ENCODE measurements at regions of chr12 and their contacts with region 1.

Region 1: GRCh38 chr12:23204933-23205778 is 580.2 kb downstream of the ETNK1 start:
- DNase-seq: peak in 6 of 9 donors; percentile 5 to 29 (median 24)
- ATAC-seq: peak; percentile 70
- H3K4me3 ChIP-seq: no peak overlapping the region
- H3K4me3 Mint-ChIP-seq: no peak overlapping the region
- H3K27ac ChIP-seq: no peak overlapping the region
- H3K27ac Mint-ChIP-seq: no peak overlapping the region
- H3K4me1 ChIP-seq: no peaks in the 10 kb centered on the region
- H3K4me1 Mint-ChIP-seq: no peaks in the 10 kb centered on the region
- H3K27me3 ChIP-seq: no peaks in the 10 kb centered on the region
- H3K27me3 Mint-ChIP-seq: peaks cover 0 to 6% (median 5%) of the 10 kb centered on the region in 5 donors

Region 2: DNA sequence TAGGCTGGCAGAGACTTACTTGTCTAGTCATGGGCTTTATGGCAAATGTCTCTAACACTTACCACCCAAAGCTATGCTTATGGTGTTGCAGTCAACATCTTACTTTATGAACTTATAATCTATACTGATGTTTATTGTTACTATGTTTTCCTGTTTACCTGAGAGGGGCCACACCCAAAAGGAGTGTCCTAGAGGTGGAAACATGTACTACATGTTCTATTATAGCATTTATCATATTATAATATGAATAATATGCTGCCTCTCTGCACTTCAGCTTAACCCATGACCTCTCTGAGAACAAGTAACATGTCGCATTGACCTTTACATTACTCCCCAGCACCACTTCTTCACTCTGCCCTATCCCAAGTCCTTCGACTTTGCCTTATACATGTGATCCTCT is 78.4 kb before region 1 on chr12:
- CTCF ChIA-PET with region 1: no interaction called
- POLR2A ChIA-PET with region 1: no interaction called
- intact Hi-C with region 1: no loop called
- DNase-seq: no peak
- ATAC-seq: no peak
- H3K4me3 ChIP-seq: no peak overlapping the region
- H3K4me3 Mint-ChIP-seq: no peak overlapping the region
- H3K27ac ChIP-seq: no peak overlapping the region
- H3K27ac Mint-ChIP-seq: no peak overlapping the region
- H3K4me1 ChIP-seq: no peaks in the 10 kb centered on the region
- H3K4me1 Mint-ChIP-seq: no peaks in the 10 kb centered on the region
- H3K27me3 ChIP-seq: no peaks in the 10 kb centered on the region
- H3K27me3 Mint-ChIP-seq: no peaks in the 10 kb centered on the region

Region 3: DNA sequence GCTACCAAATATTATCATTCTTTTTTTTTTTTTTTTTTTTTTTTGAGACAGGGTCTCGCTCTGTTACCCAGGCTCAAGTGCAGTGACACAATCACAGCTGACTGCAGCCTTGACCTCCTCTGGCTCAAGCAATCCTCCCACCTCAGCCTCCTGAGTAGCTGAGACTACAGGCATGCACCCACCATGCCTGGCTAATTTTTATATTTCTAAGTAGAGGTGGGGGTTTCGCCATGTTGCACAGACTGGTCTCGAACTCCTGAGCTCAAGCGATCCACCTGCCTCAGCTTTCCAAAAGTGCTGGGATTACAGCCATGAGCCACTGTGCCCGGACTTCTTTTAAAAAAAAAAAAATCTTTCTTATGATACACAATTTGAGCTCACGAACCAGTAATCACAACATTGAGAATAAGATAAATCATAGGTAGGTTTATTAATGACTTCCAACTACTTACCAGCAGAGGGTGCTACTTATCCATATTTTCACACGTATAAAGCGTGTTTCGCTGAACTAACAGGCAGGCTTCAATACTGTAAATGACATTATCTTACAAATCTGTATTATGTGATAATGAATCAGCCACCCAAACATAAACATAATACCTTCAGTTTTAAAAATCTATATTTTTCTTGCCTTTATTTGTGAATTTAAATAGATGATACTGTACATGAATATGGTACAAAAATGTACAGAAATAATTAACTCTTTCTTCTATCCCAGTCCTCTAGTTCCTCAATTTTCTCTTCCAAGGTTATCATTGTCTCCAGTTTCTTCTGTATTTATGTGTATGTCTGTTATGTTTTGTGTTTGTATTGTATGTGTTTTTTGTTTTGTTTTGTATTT is 1786.3 kb after region 1 on chr12:
- CTCF ChIA-PET with region 1: no interaction called
- POLR2A ChIA-PET with region 1: no interaction called
- intact Hi-C with region 1: loop called in 1 of 2 experiments (anchors 2 kb)
- DNase-seq: peak in 7 of 9 donors; percentile 53 to 75 (median 64)
- ATAC-seq: peak; percentile 97
- H3K4me3 ChIP-seq: no peak overlapping the region
- H3K4me3 Mint-ChIP-seq: no peak overlapping the region
- H3K27ac ChIP-seq: no peak overlapping the region
- H3K27ac Mint-ChIP-seq: no peak overlapping the region
- H3K4me1 ChIP-seq: no peaks in the 10 kb centered on the region
- H3K4me1 Mint-ChIP-seq: peaks cover 0 to 2% (median 0%) of the 10 kb centered on the region in 7 donors
- H3K27me3 ChIP-seq: no peaks in the 10 kb centered on the region
- H3K27me3 Mint-ChIP-seq: peaks cover 0 to 7% (median 6%) of the 10 kb centered on the region in 5 donors

Measured in naive thymus-derived CD4-positive, alpha-beta T cell (primary cell).